Ascending aorta (tissue), 2 donors: ENCODE measurements at regions of chr6 and their contacts with region 1.

Region 1: DNA sequence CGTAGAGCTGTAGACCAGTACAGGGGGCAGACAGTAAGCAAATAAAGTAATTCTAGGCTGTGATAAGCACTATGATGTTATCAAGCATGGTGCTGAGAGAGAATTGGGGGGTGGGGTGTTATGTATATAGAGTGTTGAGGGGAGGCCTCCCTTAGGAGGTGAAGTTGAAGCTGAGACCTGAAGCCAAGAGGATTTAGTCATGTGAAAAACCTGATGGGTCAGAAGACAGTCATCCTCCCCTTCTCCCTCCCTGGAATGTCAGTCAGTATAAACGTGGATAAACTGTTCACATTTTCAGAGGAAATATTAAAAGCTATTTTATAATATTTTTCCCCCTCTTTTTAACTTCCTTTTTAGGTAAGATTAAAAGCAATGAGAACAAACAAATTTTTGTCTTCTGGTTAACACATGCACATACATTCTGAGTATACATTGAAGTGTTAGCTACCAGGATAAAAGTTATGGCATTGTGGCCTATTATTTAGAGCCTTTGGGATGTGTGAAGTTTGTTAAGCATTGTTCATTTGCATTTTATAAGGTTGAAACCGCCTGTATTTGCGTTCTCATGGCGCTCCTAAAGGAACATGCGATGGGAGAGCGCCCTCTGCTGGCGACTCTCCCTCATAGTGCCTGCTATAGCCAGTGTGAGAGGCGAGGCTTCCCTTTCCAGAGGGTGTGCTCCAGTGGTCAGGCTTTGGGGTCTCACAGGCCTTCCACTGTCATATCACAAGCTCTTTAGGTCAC is 35.4 kb upstream of the MAPK13 start:
- DNase-seq: peak; percentile 29 to 91
- H3K4me3 ChIP-seq: no peak overlapping the region
- H3K27ac ChIP-seq: peak overlapping the region; percentile 6 to 58
- H3K4me1 ChIP-seq: peaks cover 0 to 3% of the 10 kb centered on the region in 2 donors
- H3K27me3 ChIP-seq: no peaks in the 10 kb centered on the region
- CTCF ChIP-seq: peak; percentile 88 to 91 (median 88)

Region 2: DNA sequence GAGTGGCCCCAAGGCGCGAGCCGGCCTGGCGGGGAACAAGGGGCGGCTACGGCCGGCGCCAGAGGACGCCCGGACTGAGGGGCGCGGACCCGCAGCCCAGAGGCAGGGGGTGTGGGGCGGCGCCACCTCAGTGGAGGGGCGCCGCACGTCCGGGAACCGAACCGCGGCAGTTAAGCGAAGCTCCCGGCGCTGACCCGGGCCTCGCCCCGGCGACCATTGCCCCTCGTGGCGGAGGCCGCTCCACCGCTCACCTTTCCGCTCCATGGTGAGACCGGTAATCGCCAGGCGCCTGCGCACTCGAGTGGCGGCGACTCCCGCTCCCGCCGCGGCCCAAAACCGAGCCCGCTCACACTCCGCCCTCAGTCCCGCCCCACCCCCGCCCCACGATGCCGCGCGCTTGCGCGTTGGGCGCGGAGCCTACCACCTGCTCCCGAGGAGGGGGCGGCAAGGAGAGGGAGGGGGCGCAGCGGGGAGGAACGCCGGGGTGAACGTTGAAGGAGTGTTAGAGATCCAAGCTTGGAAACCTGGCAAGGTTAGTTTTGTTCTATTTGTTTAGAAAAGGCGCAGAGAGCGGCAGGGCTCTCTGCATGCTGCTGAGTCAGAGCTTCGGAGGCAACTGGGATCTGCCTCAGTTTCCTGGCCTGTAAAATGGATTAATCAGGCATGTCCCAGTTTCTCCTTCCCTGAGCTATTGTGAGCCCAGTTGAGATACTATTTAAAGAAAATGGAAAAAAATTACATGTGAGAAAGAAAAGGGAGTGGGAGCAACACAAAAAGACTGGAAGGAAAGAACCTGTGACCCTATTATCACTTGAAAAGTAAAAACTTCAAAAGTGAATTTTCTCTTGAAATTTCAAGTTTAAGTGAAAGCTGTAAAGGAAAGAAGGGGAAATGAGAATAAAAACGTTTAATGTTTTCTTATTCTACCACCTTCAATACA is 173.9 kb before region 1 on chr6 and contains the start of gene SRPK1:
- intact Hi-C with region 1: loop called (anchors 10 kb)
- DNase-seq: peak; percentile 32 to 91
- H3K4me3 ChIP-seq: peak within 1 kb of the TSS; percentile 83 to 89
- H3K27ac ChIP-seq: peak within 1 kb of the TSS; percentile 70 to 80
- H3K4me1 ChIP-seq: peaks cover 0 to 2% of the 10 kb centered on the region in 2 donors
- H3K27me3 ChIP-seq: no peaks in the 10 kb centered on the region
- CTCF ChIP-seq: no peak
- total RNA-seq, gene SRPK1: 16.2 TPM

Region 3: GRCh38 chr6:36027501-36028087 is 67.3 kb before region 1 on chr6 and contains the start of gene MAPK14:
- intact Hi-C with region 1: loop called (anchors 1 kb)
- DNase-seq: peak; percentile 97 to 100
- H3K4me3 ChIP-seq: peak within 1 kb of the TSS; percentile 97 to 98
- H3K27ac ChIP-seq: peak within 1 kb of the TSS; percentile 85 to 94
- H3K4me1 ChIP-seq: peaks cover 0 to 35% of the 10 kb centered on the region in 2 donors
- H3K27me3 ChIP-seq: no peaks in the 10 kb centered on the region
- CTCF ChIP-seq: peak; percentile 93 to 97 (median 93)
- total RNA-seq, gene MAPK14: 37.3 TPM

Region 4: DNA sequence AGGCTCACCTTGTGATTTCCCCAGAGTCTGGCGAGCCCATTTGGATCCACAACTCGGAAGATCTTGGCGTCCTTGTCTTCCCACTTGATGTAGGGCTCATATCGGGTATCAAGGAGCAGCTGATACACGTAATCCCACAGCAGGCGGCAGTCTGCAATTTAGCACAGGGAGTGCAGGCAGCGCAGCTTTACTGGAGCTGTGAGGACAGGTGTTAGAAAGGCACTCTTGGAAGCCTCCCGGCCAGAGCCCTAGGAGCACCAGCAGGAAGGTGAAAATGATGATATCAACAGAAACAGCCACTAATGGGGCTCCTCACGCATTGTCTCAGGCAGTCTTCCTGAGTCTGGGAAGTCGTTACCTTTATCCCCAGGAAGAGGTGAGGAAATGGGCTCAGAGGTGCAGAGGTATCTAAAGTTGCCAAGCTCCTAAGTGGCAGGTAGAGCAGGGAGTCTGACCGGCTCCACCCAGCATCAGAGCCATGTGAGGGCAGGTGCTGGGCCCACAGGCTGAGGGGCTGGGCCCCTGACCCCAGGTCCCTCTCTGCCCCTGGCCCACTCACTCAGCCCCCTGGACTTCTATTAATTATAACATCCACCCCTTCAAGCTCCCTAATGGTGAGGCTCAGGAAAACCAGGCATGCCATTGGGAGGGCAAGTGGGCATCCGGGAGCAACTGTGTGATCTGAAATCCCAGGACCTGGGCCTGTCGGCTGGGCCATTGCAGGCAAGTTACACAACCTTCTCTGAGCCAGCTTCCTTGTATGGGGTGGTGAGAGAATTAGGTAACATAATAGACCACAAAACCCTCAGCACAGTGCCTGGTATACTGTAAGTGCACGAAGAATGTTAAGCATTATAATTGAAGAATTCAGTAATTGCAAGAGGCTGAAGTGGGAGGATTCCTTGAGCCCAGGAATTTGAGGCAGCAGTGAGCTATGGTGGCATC is 274.3 kb after region 1 on chr6:
- intact Hi-C with region 1: no loop called
- DNase-seq: no peak
- H3K4me3 ChIP-seq: no peak overlapping the region
- H3K27ac ChIP-seq: no peak overlapping the region
- H3K4me1 ChIP-seq: no peaks in the 10 kb centered on the region
- H3K27me3 ChIP-seq: no peaks in the 10 kb centered on the region
- CTCF ChIP-seq: no peak